ENCODE measurements at regions of chr1 and their contacts with region 1.

Region 1: GRCh38 chr1:7667625-7668218 is 103.4 kb upstream of the VAMP3 start:
- DNase-seq: peak; percentile 65 to 89
- ATAC-seq: peak; percentile 90

Region 2: GRCh38 chr1:7752512-7753417 is 85.0 kb after region 1 on chr1:
- intact Hi-C with region 1: loop called (anchors 5 kb)
- DNase-seq: peak in 1 of 2 donors; percentile 72
- ATAC-seq: peak; percentile 58

Region 3: DNA sequence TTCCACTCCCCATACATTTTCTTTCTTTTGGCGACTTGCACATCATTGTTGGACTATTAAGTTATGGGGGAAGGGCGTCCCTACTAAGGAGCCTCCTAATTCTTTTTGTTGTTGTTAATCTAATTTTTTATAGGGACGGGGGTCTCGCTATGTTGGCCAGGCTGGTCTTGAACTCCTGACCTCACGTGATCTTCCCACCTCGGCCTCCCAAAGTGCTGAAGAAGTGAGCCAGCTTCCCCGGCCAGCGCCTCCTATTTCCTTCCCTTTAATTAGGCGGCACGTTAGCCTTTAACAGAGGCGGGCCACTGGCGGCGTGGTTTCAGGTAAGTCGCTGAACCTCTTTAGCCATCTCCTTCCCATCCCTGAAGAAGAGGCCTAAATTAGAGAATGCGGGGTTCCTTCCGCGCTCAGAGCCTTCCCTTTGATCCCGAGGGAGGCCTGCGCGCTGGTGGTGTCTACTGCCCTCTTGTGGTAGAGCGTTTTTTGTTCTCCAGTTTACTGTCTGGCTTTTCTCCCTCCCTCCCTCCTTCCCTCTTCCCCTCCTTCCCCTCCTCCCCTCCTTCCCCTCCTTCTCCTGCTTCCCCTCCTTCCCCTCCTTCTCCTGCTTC is 234.9 kb after region 1 on chr1:
- intact Hi-C with region 1: loop called (anchors 5 to 10 kb)
- DNase-seq: peak; percentile 30 to 38
- ATAC-seq: peak; percentile 82